CD4-positive, alpha-beta memory T cell (primary cell): ENCODE measurements at regions of chr6 and their contacts with region 1.

Region 1: DNA sequence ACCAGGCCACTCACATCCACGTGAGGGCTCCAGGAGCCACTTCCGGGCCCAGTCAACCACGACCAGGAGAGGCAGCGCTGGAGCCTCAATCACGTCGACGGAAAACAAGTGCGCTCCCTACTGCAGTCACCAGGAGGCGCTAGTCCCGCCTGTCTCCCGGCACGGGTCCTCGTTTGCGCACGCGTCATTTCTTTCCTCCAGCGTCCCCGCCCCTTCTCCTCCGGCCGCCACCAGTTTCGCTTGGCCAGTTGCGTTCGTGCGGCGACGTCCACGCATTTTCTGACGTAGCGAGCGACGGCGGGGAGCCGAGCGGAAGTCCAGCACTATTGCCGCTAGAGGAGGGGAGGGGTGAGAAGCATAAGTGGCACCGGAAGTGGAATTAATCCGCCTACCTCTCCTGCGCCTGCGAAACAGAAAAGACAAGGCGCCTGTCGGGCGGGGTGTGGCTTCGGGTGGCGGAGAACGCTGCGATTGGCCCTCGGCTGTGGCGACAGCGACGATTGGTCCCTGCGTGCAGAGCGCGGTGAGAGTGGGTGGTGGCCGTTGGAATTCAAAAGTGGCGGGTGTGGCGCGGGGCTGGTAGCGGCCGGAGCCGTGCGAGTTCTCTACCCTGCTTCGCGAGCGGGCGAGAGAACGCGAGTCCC is at the start of gene KIFC1:
- DNase-seq: peak; percentile 99
- H3K4me3 ChIP-seq: peak within 1 kb of the TSS; percentile 18 to 78
- H3K4me3 Mint-ChIP-seq: peak within 1 kb of the TSS; percentile 83 to 94 (median 86)
- H3K27ac ChIP-seq: peak within 1 kb of the TSS; percentile 74
- H3K27ac Mint-ChIP-seq: peak within 1 kb of the TSS; percentile 89 to 99 (median 98)
- H3K4me1 ChIP-seq: peaks cover 21% of the 10 kb centered on the region
- H3K4me1 Mint-ChIP-seq: peaks cover 25 to 40% (median 30%) of the 10 kb centered on the region in 4 donors
- H3K27me3 ChIP-seq: no peaks in the 10 kb centered on the region
- H3K27me3 Mint-ChIP-seq: no peaks in the 10 kb centered on the region
- total RNA-seq, gene KIFC1: 0.61 to 0.69 TPM

Region 2: GRCh38 chr6:33014841-33015634 is 376.4 kb before region 1 on chr6:
- CTCF ChIA-PET with region 1: no interaction called
- POLR2A ChIA-PET with region 1: no interaction called
- intact Hi-C with region 1: no loop called
- DNase-seq: peak; percentile 66 to 79 (median 73)
- H3K4me3 ChIP-seq: no peak overlapping the region
- H3K4me3 Mint-ChIP-seq: no peak overlapping the region
- H3K27ac ChIP-seq: no peak overlapping the region
- H3K27ac Mint-ChIP-seq: no peak overlapping the region
- H3K4me1 ChIP-seq: peaks cover 24% of the 10 kb centered on the region
- H3K4me1 Mint-ChIP-seq: peaks cover 0 to 20% (median 20%) of the 10 kb centered on the region in 4 donors
- H3K27me3 ChIP-seq: peaks cover 11% of the 10 kb centered on the region
- H3K27me3 Mint-ChIP-seq: peaks cover 8 to 11% of the 10 kb centered on the region in 2 donors

Region 3: DNA sequence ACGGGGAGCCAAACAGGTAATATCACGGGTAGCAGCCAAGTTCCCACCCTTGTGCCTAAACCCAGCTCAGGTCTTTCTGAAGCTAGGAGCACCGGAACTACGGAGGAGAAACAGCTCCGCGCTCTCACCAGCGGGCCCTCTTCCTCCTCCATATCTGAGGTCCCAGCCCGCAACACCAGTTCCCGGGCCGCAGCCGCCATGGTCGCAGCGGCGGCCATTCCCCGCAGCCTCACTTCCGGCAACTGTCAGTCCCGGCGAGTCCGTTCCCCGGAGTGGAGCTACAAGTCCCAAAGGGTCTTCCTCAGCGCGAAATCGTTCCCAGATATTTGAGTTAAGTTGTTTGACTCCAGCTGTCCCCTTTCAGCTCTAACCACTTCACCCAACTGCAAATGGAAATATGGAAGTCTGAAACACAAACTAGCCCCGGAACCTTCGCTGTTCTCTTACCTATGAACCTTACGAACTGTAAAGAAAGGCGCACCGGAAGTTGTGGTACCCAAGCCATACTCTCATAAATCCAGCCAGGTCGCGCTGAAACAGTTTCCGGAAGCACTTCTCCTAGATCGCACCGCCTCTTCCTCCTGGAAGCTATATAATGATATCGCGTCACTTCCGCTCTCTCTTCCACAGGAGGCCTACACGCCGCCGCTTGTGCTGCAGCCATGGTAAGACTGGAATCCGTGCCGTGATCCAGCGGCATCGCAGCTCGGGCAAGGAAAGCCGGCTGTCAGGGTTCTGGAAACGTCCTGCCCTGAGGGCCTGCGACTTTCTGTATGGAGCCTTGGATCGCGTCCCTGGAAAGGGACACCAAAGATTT is 119.7 kb before region 1 on chr6 and contains the starts of genes RPS18 and VPS52:
- CTCF ChIA-PET with region 1: interaction called, 8 read pairs
- POLR2A ChIA-PET with region 1: interaction called, 11 read pairs
- intact Hi-C with region 1: loop called (anchors 1 kb)
- DNase-seq: peak; percentile 95 to 98 (median 96)
- H3K4me3 ChIP-seq: peak within 1 kb of the TSS; percentile 75 to 90
- H3K4me3 Mint-ChIP-seq: peak within 1 kb of the TSS; percentile 96 to 100 (median 98)
- H3K27ac ChIP-seq: peak within 1 kb of the TSS; percentile 85
- H3K27ac Mint-ChIP-seq: peak within 1 kb of the TSS; percentile 97 to 100 (median 99)
- H3K4me1 ChIP-seq: peaks cover 62% of the 10 kb centered on the region
- H3K4me1 Mint-ChIP-seq: peaks cover 43 to 78% (median 61%) of the 10 kb centered on the region in 4 donors
- H3K27me3 ChIP-seq: no peaks in the 10 kb centered on the region
- H3K27me3 Mint-ChIP-seq: no peaks in the 10 kb centered on the region
- total RNA-seq, gene RPS18: 3,264 to 3,439 TPM
- total RNA-seq, gene VPS52: 89.4 to 95.7 TPM

Region 4: GRCh38 chr6:33317669-33318425 is 73.6 kb before region 1 on chr6 and contains the start of gene ZBTB22:
- CTCF ChIA-PET with region 1: interaction called, 10 read pairs
- POLR2A ChIA-PET with region 1: interaction called, 7 read pairs
- intact Hi-C with region 1: loop called (anchors 1 kb)
- DNase-seq: peak; percentile 96 to 99 (median 97)
- H3K4me3 ChIP-seq: peak within 1 kb of the TSS; percentile 73 to 100
- H3K4me3 Mint-ChIP-seq: peak within 1 kb of the TSS; percentile 98 to 100 (median 99)
- H3K27ac ChIP-seq: peak within 1 kb of the TSS; percentile 83
- H3K27ac Mint-ChIP-seq: peak within 1 kb of the TSS; percentile 98 to 99 (median 98)
- H3K4me1 ChIP-seq: peaks cover 73% of the 10 kb centered on the region
- H3K4me1 Mint-ChIP-seq: peaks cover 40 to 100% (median 62%) of the 10 kb centered on the region in 4 donors
- H3K27me3 ChIP-seq: no peaks in the 10 kb centered on the region
- H3K27me3 Mint-ChIP-seq: no peaks in the 10 kb centered on the region
- total RNA-seq, gene ZBTB22: 28.6 to 28.7 TPM

Region 5: DNA sequence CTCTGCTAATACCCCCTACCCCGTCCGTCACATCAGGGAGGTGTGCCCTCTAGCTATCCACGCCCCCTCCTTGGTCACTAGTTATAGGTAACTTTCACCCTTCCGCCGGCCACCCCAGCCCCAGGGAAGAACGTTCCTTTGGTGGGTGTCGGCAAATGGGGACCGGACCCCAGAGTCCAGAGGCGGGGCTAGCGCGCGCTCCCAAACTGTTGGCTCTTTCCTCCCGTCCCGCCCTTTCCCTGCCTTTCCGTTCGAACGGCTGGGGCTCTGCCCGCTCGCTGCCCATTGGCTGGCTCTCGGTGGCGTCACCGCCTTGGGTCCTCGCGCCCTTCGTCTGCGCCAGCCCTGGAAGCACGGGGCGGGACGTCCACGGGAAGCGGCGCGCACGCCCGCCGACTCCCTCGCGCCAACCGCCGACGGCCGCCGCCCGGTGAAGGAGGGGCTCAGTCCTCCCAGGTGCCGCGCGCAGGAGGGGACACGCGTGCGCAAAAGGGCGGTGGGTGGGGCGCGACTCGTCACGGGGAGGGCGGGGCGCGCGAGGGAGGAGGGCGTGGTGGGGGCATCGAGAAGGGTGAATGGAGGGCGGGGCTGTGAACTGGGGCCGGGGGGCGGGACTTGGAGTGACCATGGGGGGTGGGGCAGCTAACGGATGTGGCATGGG is 18.8 kb after region 1 on chr6:
- CTCF ChIA-PET with region 1: interaction called, 7 read pairs
- POLR2A ChIA-PET with region 1: interaction called, 8 read pairs
- intact Hi-C with region 1: loop called (anchors 1 kb)
- DNase-seq: peak; percentile 97 to 98 (median 97)
- H3K4me3 ChIP-seq: peak overlapping the region; percentile 67 to 92
- H3K4me3 Mint-ChIP-seq: peak overlapping the region; percentile 85 to 95 (median 92)
- H3K27ac ChIP-seq: peak overlapping the region; percentile 99
- H3K27ac Mint-ChIP-seq: peak overlapping the region; percentile 94 to 100 (median 99)
- H3K4me1 ChIP-seq: peaks cover 57% of the 10 kb centered on the region
- H3K4me1 Mint-ChIP-seq: peaks cover 31 to 68% (median 48%) of the 10 kb centered on the region in 4 donors
- H3K27me3 ChIP-seq: no peaks in the 10 kb centered on the region
- H3K27me3 Mint-ChIP-seq: no peaks in the 10 kb centered on the region

Region 6: GRCh38 chr6:33430991-33431879 is 39.8 kb after region 1 on chr6:
- CTCF ChIA-PET with region 1: interaction called, 26 read pairs
- POLR2A ChIA-PET with region 1: interaction called, 26 read pairs
- intact Hi-C with region 1: loop called (anchors 1 kb)
- DNase-seq: peak; percentile 82 to 91 (median 84)
- H3K4me3 ChIP-seq: peak overlapping the region; percentile 11 to 54
- H3K4me3 Mint-ChIP-seq: peak overlapping the region; percentile 71 to 94 (median 90)
- H3K27ac ChIP-seq: peak overlapping the region; percentile 76
- H3K27ac Mint-ChIP-seq: peak overlapping the region; percentile 94 to 99 (median 98)
- H3K4me1 ChIP-seq: peaks cover 53% of the 10 kb centered on the region
- H3K4me1 Mint-ChIP-seq: peaks cover 48 to 66% (median 60%) of the 10 kb centered on the region in 4 donors
- H3K27me3 ChIP-seq: no peaks in the 10 kb centered on the region
- H3K27me3 Mint-ChIP-seq: no peaks in the 10 kb centered on the region

Region 7: DNA sequence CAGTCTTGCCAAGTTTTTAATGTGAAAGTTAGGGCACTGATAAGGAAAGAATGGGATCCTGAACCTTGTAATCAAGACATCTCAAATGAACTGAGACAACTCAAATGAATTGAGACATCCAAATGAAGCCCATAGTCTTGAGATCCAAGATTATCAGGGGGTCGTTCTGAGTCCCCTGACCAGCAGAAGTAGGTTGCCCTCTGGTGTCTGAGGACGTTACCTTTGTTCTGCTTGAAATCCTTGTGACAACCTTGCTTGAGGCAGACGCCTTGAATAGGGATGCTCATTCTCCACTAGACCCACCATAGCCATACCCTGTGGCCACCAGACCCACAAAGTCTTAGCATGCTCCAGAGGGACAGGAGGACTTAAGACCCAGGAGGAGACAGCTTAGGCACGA is 100.7 kb after region 1 on chr6:
- CTCF ChIA-PET with region 1: no interaction called
- POLR2A ChIA-PET with region 1: no interaction called
- intact Hi-C with region 1: loop called (anchors 1 kb)
- DNase-seq: no peak
- H3K4me3 ChIP-seq: no peak overlapping the region
- H3K4me3 Mint-ChIP-seq: no peak overlapping the region
- H3K27ac ChIP-seq: no peak overlapping the region
- H3K27ac Mint-ChIP-seq: no peak overlapping the region
- H3K4me1 ChIP-seq: no peaks in the 10 kb centered on the region
- H3K4me1 Mint-ChIP-seq: no peaks in the 10 kb centered on the region
- H3K27me3 ChIP-seq: no peaks in the 10 kb centered on the region
- H3K27me3 Mint-ChIP-seq: peaks cover 2% of the 10 kb centered on the region in 2 donors

Region 8: GRCh38 chr6:33513213-33513612 is 121.8 kb after region 1 on chr6:
- CTCF ChIA-PET with region 1: no interaction called
- POLR2A ChIA-PET with region 1: no interaction called
- intact Hi-C with region 1: no loop called
- DNase-seq: no peak
- H3K4me3 ChIP-seq: no peak overlapping the region
- H3K4me3 Mint-ChIP-seq: no peak overlapping the region
- H3K27ac ChIP-seq: no peak overlapping the region
- H3K27ac Mint-ChIP-seq: peak overlapping the region in 1 of 7 donors; percentile 30
- H3K4me1 ChIP-seq: peaks cover 8% of the 10 kb centered on the region
- H3K4me1 Mint-ChIP-seq: peaks cover 2 to 21% (median 8%) of the 10 kb centered on the region in 4 donors
- H3K27me3 ChIP-seq: no peaks in the 10 kb centered on the region
- H3K27me3 Mint-ChIP-seq: peaks cover 0 to 6% of the 10 kb centered on the region in 2 donors